Aorta (tissue), 5 donors: ENCODE measurements at regions of chr2 and their contacts with region 1.

Region 1: DNA sequence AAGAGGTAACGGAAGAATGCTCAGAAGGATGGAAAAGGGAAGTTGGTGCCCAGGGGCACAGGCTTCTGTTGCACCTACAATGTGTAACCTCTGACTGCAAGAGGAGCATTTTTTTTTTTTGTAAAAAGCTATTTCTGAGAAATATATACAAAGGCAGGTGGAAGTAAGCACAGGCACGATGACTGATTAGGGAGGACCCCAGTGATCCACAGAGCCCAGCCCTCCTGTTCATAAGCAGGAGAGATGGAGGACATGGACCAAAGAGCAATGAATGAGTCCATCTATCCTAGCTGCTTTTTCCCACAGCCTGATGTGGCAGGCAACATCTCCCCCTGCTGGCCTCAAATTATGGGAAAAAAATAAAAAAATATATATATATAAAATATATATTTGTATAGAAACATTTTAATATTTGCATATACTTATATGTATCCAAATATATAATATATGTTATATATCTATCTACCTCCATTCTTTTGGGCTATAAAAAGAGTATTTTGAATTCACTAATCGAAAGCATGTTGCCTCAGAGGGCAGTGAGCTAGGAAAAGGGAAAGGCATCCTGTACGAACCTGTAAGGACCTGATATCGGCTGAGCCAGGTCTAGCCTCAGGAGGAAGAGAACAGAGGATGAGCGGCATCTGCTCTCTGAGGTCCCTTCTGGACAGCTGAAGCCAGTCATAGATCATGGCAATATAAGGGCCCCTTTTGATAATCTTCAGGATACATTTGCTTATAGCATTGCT is 166.0 kb upstream of the STK17B start:
- DNase-seq: no peak
- ATAC-seq: no peak
- H3K4me3 ChIP-seq: no peak overlapping the region
- H3K27ac ChIP-seq: no peak overlapping the region
- H3K4me1 ChIP-seq: no peaks in the 10 kb centered on the region
- H3K27me3 ChIP-seq: no peaks in the 10 kb centered on the region

Region 2: GRCh38 chr2:196413821-196414274 is 76.5 kb after region 1 on chr2:
- intact Hi-C with region 1: loop called in 1 of 2 experiments (anchors 10 kb)
- DNase-seq: no peak
- ATAC-seq: peak; percentile 23
- H3K4me3 ChIP-seq: no peak overlapping the region
- H3K27ac ChIP-seq: peak overlapping the region in 1 of 2 donors; percentile 7
- H3K4me1 ChIP-seq: peaks cover 0 to 5% of the 10 kb centered on the region in 2 donors
- H3K27me3 ChIP-seq: no peaks in the 10 kb centered on the region

Region 3: DNA sequence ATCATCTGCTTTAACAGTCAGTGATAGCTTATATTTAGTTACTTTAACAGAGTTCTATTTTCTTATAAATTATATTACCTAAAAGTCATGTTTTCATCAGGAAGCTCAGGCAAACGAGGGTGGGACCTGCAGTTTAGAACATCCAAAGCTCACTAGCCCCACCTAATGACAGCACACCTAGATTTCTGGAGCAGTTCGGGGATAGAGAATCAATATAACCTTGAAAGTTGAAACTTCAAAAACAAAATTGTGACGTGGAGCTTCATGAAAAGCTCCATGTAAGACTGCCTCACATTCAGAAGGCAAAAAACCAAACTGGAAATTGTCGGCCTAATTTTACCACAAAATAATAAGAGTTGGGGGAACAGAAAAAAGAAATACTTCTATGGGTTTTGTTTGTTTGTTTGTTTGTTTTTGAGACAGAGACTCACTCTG is 116.2 kb after region 1 on chr2:
- intact Hi-C with region 1: loop called in 1 of 2 experiments (anchors 10 kb)
- DNase-seq: no peak
- ATAC-seq: no peak
- H3K4me3 ChIP-seq: no peak overlapping the region
- H3K27ac ChIP-seq: no peak overlapping the region
- H3K4me1 ChIP-seq: no peaks in the 10 kb centered on the region
- H3K27me3 ChIP-seq: no peaks in the 10 kb centered on the region

Region 4: GRCh38 chr2:196468394-196468793 is 131.0 kb after region 1 on chr2:
- intact Hi-C with region 1: no loop called
- DNase-seq: no peak
- ATAC-seq: no peak
- H3K4me3 ChIP-seq: no peak overlapping the region
- H3K27ac ChIP-seq: no peak overlapping the region
- H3K4me1 ChIP-seq: no peaks in the 10 kb centered on the region
- H3K27me3 ChIP-seq: no peaks in the 10 kb centered on the region